GM23248 (cell line): ENCODE measurements at regions of chr20 and their contacts with region 1.

Region 1: GRCh38 chr20:43187476-43188233 is 2.1 kb downstream of the PTPRT start:
- DNase-seq: peak; percentile 73
- H3K4me3 ChIP-seq: no peak overlapping the region
- H3K27ac ChIP-seq: no peak overlapping the region
- H3K4me1 ChIP-seq: no peaks in the 10 kb centered on the region
- H3K27me3 ChIP-seq: peaks cover 46% of the 10 kb centered on the region

Region 2: DNA sequence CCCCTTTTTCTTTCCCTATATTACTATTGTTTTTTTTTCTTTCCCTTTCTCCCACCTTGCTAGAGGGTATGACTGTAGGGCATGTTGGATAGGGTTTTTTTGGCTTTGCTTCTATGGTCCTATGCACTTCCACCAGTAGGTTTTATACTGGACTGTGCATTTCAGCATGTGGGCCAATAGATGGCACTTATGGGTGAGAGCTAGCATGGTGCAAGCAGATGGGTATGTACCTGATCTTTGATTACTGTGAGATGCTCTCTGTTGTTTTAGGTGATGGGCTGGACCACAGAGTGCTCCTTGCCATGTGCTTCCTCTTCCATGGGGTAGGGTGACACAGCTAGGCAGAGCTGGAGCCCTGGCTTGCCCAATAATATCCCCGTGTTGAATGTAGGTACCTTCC is 1441.0 kb before region 1 on chr20:
- in situ Hi-C with region 1: loop called (anchors 10 kb)
- DNase-seq: no peak
- H3K4me3 ChIP-seq: no peak overlapping the region
- H3K27ac ChIP-seq: no peak overlapping the region
- H3K4me1 ChIP-seq: no peaks in the 10 kb centered on the region
- H3K27me3 ChIP-seq: 0 out of 2 replicates have a peak, but pooled peaks cover 8% of the 10 kb centered on the region

Region 3: DNA sequence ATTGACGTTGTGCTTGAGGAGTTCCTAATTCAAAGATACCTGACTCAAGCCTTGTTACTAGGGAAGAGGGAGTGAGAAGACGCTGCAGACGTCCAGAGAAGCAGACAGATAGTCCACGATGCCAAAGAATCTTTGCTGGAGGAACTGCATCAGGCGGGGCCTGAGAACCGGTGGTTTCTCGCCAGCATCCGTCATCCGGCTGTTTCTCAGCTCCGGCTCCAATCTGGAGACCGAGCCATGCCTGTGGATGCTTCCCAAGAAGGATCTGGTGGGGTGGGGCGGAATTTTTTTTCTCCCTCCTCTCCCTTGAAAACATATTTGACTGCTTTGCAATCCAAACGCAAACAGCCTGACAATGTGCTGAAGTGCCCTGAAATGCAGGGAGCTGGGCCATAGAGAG is 144.3 kb after region 1 on chr20:
- in situ Hi-C with region 1: no loop called
- DNase-seq: peak; percentile 32
- H3K4me3 ChIP-seq: no peak overlapping the region
- H3K27ac ChIP-seq: no peak overlapping the region
- H3K4me1 ChIP-seq: no peaks in the 10 kb centered on the region
- H3K27me3 ChIP-seq: 0 out of 2 replicates have a peak, but pooled peaks cover 7% of the 10 kb centered on the region